K562 (cell line): ENCODE measurements at regions of chr5 and their contacts with region 1.

Region 1: GRCh38 chr5:134140530-134141201 is 26.2 kb downstream of the TCF7 start:
- DNase-seq: peak; percentile 74 to 94 (median 82)
- ATAC-seq: peak; percentile 92
- H3K4me3 ChIP-seq: no peak overlapping the region
- H3K27ac ChIP-seq: peak overlapping the region; percentile 3; the same call in 2 of the 3 replicates
- H3K4me1 ChIP-seq: peaks cover 10 to 31% of the 10 kb centered on the region in 2 experiments; a peak in 4 of 5 replicates
- H3K27me3 ChIP-seq: no peaks in the 10 kb centered on the region
- CTCF ChIP-seq: peak; percentile 88 to 92 (median 88)
- EP300 ChIP-seq: peak; percentile 40; the same call in 1 of the 2 replicates
- POLR2A ChIP-seq: no peak
- RAD21 ChIP-seq: peak; percentile 49 to 73

Region 2: DNA sequence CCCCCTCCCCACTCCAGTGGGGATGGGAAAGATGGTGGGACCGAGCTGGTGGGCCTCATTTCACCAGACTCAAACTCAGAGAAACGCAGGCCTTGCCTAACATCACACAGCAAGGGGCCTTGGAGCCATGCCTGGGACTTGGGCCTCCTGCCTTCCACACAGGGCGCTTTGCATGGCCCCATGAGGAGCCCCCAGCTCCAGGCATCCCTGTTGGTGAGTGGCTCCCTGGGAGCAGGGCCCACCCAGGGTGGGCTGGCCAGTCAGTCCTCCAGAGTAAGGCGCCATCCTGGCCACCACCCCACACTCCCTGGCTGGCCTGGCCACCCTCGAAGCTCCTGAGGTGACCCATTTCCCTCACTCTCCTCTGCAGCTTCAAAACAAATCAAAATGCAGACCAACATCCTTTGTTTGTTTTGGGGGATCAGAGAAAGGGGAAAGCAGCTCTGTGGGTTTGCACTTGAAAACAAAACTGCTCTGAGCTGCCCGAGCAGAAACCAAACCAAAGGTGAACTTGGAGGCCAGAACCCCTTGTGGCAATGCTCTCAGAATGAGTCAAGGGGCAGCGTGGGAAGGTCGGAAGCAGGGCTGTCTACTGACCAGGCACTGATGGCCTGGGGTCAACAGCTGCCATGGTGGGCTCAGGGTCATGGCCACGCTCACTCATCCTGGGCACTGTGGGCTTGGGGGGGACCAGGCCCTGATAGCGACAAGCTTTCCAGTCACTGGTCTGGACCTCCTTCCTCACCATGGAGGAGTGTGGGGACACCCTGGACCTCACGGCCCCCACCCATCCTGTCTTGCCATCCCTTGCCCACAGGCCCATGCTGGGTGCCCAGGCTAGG is 98.9 kb before region 1 on chr5:
- CTCF ChIA-PET with region 1: interaction called, 39 read pairs
- POLR2A ChIA-PET with region 1: interaction called, 4 read pairs
- in situ Hi-C with region 1: loop called (anchors 5 kb)
- intact Hi-C with region 1: loop called (anchors 1 kb)
- DNase-seq: no peak
- ATAC-seq: no peak
- H3K4me3 ChIP-seq: no peak overlapping the region
- H3K27ac ChIP-seq: no peak overlapping the region
- H3K4me1 ChIP-seq: no peaks in the 10 kb centered on the region; a peak in 1 of 5 replicates
- H3K27me3 ChIP-seq: peaks cover 2 to 31% of the 10 kb centered on the region in 2 experiments; a peak in 2 of 5 replicates
- CTCF ChIP-seq: no peak
- EP300 ChIP-seq: no peak
- POLR2A ChIP-seq: no peak
- RAD21 ChIP-seq: no peak

Region 3: DNA sequence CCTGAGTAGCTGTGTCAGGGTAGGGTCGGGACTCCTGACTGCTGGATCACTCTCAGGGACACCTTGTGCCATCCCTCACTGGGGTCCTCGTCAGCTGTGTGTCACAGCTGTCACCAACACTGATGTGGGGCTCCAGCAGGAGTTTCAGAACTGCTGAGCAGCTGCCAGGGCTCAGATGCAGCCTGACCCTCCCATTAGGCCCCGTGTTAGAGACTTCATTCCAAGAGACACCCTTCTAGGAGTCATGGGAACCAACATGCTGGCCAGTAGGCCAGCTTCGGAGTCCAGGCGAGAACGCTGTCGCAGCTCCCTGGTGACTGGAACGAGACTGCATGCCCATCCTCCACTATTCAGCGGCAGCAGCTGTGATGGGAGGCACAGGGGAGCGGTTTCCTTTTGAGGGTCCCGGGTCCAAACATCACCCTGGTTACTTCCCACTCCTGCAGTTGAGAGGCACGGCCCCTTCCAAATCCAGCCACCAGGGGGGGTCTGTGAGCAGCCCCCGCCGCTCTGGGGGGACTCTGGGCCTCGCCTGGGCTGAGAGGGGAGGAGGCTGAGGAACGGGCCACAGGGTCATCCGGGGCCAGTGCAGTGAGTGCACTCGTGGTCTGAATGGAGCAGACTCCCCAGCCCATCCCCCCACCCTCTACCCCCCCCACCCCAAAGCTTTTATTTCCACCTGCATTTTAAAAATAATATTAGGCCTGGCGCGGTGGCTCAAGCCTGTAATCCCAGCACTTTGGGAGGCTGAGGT is 38.8 kb before region 1 on chr5:
- CTCF ChIA-PET with region 1: interaction called, 4 read pairs
- POLR2A ChIA-PET with region 1: interaction called, 4 read pairs
- in situ Hi-C with region 1: no loop called
- intact Hi-C with region 1: loop called (anchors 1 kb)
- DNase-seq: peak; percentile 75 to 93 (median 90)
- ATAC-seq: peak; percentile 94
- H3K4me3 ChIP-seq: no peak overlapping the region
- H3K27ac ChIP-seq: no peak overlapping the region
- H3K4me1 ChIP-seq: peaks cover 0 to 16% of the 10 kb centered on the region in 2 experiments; a peak in 3 of 5 replicates
- H3K27me3 ChIP-seq: no peaks in the 10 kb centered on the region
- CTCF ChIP-seq: peak; percentile 83 to 92 (median 88)
- EP300 ChIP-seq: no peak
- POLR2A ChIP-seq: no peak
- RAD21 ChIP-seq: peak; percentile 16 to 78; a peak in 2 of 4 replicates

Region 4: GRCh38 chr5:134129411-134130243 is 11.0 kb before region 1 on chr5:
- CTCF ChIA-PET with region 1: no interaction called
- POLR2A ChIA-PET with region 1: interaction called, 11 read pairs
- in situ Hi-C with region 1: no loop called
- intact Hi-C with region 1: no loop called
- DNase-seq: no peak
- ATAC-seq: no peak
- H3K4me3 ChIP-seq: no peak overlapping the region
- H3K27ac ChIP-seq: no peak overlapping the region
- H3K4me1 ChIP-seq: peaks cover 0 to 26% of the 10 kb centered on the region in 2 experiments; a peak in 2 of 5 replicates
- H3K27me3 ChIP-seq: no peaks in the 10 kb centered on the region
- CTCF ChIP-seq: no peak
- EP300 ChIP-seq: no peak
- POLR2A ChIP-seq: no peak
- RAD21 ChIP-seq: no peak